ENCODE measurements at regions of chr20 and their contacts with region 1.

Region 1: GRCh38 chr20:32762149-32762753 is at the start of gene DNMT3B:
- DNase-seq: peak; percentile 58 to 73 (median 63)
- H3K4me3 ChIP-seq: peak within 1 kb of the TSS; percentile 23 to 69
- H3K4me3 Mint-ChIP-seq: peak within 1 kb of the TSS; percentile 86 to 92 (median 88)
- H3K27ac ChIP-seq: no peak within 1 kb of the TSS
- H3K27ac Mint-ChIP-seq: peak within 1 kb of the TSS; percentile 22 to 79 (median 61)
- H3K4me1 ChIP-seq: peaks cover 18% of the 10 kb centered on the region
- H3K4me1 Mint-ChIP-seq: peaks cover 9 to 21% (median 13%) of the 10 kb centered on the region in 4 donors
- H3K27me3 ChIP-seq: no peaks in the 10 kb centered on the region
- H3K27me3 Mint-ChIP-seq: no peaks in the 10 kb centered on the region
- total RNA-seq, gene DNMT3B: 0.38 to 0.47 TPM

Region 2: GRCh38 chr20:32743237-32744112 is 18.8 kb before region 1 on chr20 and contains the start of gene COMMD7:
- CTCF ChIA-PET with region 1: interaction called, 6 read pairs
- POLR2A ChIA-PET with region 1: interaction called, 34 read pairs
- intact Hi-C with region 1: loop called (anchors 1 kb)
- DNase-seq: peak; percentile 54 to 81 (median 61)
- H3K4me3 ChIP-seq: peak within 1 kb of the TSS; percentile 69 to 86
- H3K4me3 Mint-ChIP-seq: peak within 1 kb of the TSS; percentile 95 to 98 (median 96)
- H3K27ac ChIP-seq: peak within 1 kb of the TSS; percentile 79
- H3K27ac Mint-ChIP-seq: peak within 1 kb of the TSS; percentile 86 to 99 (median 97)
- H3K4me1 ChIP-seq: peaks cover 33% of the 10 kb centered on the region
- H3K4me1 Mint-ChIP-seq: peaks cover 15 to 46% (median 30%) of the 10 kb centered on the region in 4 donors
- H3K27me3 ChIP-seq: no peaks in the 10 kb centered on the region
- H3K27me3 Mint-ChIP-seq: no peaks in the 10 kb centered on the region
- total RNA-seq, gene COMMD7: 29.6 to 29.7 TPM

Measured in CD4-positive, alpha-beta memory T cell (primary cell).